Mammary epithelial cell (primary cell): ENCODE measurements at regions of chr12 and their contacts with region 1.

Region 1: GRCh38 chr12:113980537-113981337 is 14.6 kb upstream of the RBM19 start:
- DNase-seq: peak; percentile 30
- H3K4me3 ChIP-seq: no peak overlapping the region
- H3K27ac ChIP-seq: no peak overlapping the region
- H3K4me1 ChIP-seq: no peaks in the 10 kb centered on the region
- H3K27me3 ChIP-seq: no peaks in the 10 kb centered on the region
- CTCF ChIP-seq: peak; percentile 99

Region 2: GRCh38 chr12:114508529-114509129 is 527.9 kb after region 1 on chr12:
- CTCF ChIA-PET with region 1: interaction called, 8 read pairs
- dilution Hi-C with region 1: no loop called
- in situ Hi-C with region 1: loop called (anchors 10 kb)
- intact Hi-C with region 1: loop called (anchors 1 kb)
- DNase-seq: peak; percentile 49
- H3K4me3 ChIP-seq: no peak overlapping the region
- H3K27ac ChIP-seq: no peak overlapping the region
- H3K4me1 ChIP-seq: no peaks in the 10 kb centered on the region
- H3K27me3 ChIP-seq: no peaks in the 10 kb centered on the region
- CTCF ChIP-seq: peak; percentile 77 to 79

Region 3: GRCh38 chr12:114636723-114637483 is 656.2 kb after region 1 on chr12:
- CTCF ChIA-PET with region 1: no interaction called
- dilution Hi-C with region 1: no loop called
- in situ Hi-C with region 1: no loop called
- intact Hi-C with region 1: loop called (anchors 5 kb)
- DNase-seq: peak; percentile 56
- H3K4me3 ChIP-seq: no peak overlapping the region
- H3K27ac ChIP-seq: peak overlapping the region; percentile 3
- H3K4me1 ChIP-seq: peaks cover 16% of the 10 kb centered on the region
- H3K27me3 ChIP-seq: no peaks in the 10 kb centered on the region
- CTCF ChIP-seq: peak; percentile 24 to 48

Region 4: GRCh38 chr12:114668151-114668885 is 687.6 kb after region 1 on chr12:
- CTCF ChIA-PET with region 1: interaction called, 11 read pairs
- dilution Hi-C with region 1: no loop called
- in situ Hi-C with region 1: no loop called
- intact Hi-C with region 1: no loop called
- DNase-seq: peak; percentile 91
- H3K4me3 ChIP-seq: peak overlapping the region; percentile 43 to 60 (median 48)
- H3K27ac ChIP-seq: peak overlapping the region; percentile 75
- H3K4me1 ChIP-seq: peaks cover 41% of the 10 kb centered on the region
- H3K27me3 ChIP-seq: no peaks in the 10 kb centered on the region
- CTCF ChIP-seq: peak; percentile 35 to 69

Region 5: GRCh38 chr12:115485503-115485902 is 1504.8 kb after region 1 on chr12:
- CTCF ChIA-PET with region 1: no interaction called
- dilution Hi-C with region 1: no loop called
- in situ Hi-C with region 1: no loop called
- intact Hi-C with region 1: no loop called
- DNase-seq: no peak
- H3K4me3 ChIP-seq: no peak overlapping the region
- H3K27ac ChIP-seq: no peak overlapping the region
- H3K4me1 ChIP-seq: no peaks in the 10 kb centered on the region
- H3K27me3 ChIP-seq: peaks cover 2% of the 10 kb centered on the region
- CTCF ChIP-seq: no peak